CD8-positive, alpha-beta T cell (primary cell): ENCODE measurements at regions of chr3 and their contacts with region 1.

Region 1: DNA sequence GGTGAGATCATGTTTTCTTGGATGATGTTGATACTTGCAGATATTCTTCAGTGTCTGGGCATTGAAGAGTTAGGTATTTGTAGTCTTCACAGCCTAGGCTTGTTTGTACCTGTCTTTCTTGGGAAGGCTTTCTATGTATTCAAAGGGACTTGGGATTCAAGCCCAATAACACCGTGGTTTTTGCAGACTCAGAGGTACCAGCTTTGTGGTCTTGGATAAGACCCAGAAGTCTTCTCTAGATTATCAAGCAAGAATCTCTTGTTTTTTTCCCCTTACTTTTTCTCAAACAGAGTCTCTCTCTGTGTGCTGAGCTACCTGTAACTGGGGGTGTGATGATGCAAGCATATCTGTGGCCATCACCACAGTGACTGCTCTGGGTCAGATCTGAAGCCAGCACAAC is 42.7 kb upstream of the CCK start:
- DNase-seq: no peak
- ATAC-seq: no peak
- H3K4me3 ChIP-seq: no peak overlapping the region
- H3K4me3 Mint-ChIP-seq: no peak overlapping the region
- H3K27ac ChIP-seq: no peak overlapping the region
- H3K27ac Mint-ChIP-seq: no peak overlapping the region
- H3K4me1 ChIP-seq: no peaks in the 10 kb centered on the region
- H3K4me1 Mint-ChIP-seq: no peaks in the 10 kb centered on the region
- H3K27me3 ChIP-seq: no peaks in the 10 kb centered on the region
- H3K27me3 Mint-ChIP-seq: peaks cover 6% of the 10 kb centered on the region
- CTCF ChIP-seq: no peak

Region 2: GRCh38 chr3:42345811-42346210 is 37.2 kb after region 1 on chr3:
- CTCF ChIA-PET with region 1: no interaction called
- POLR2A ChIA-PET with region 1: no interaction called
- intact Hi-C with region 1: loop called in 1 of 2 experiments (anchors 1 kb)
- DNase-seq: peak in 7 of 9 experiments; percentile 20 to 78 (median 23)
- ATAC-seq: no peak
- H3K4me3 ChIP-seq: no peak overlapping the region
- H3K4me3 Mint-ChIP-seq: no peak overlapping the region
- H3K27ac ChIP-seq: peak overlapping the region; percentile 46 to 53
- H3K27ac Mint-ChIP-seq: no peak overlapping the region
- H3K4me1 ChIP-seq: peaks cover 27% of the 10 kb centered on the region
- H3K4me1 Mint-ChIP-seq: no peaks in the 10 kb centered on the region
- H3K27me3 ChIP-seq: no peaks in the 10 kb centered on the region
- H3K27me3 Mint-ChIP-seq: peaks cover 12% of the 10 kb centered on the region
- CTCF ChIP-seq: no peak

Region 3: DNA sequence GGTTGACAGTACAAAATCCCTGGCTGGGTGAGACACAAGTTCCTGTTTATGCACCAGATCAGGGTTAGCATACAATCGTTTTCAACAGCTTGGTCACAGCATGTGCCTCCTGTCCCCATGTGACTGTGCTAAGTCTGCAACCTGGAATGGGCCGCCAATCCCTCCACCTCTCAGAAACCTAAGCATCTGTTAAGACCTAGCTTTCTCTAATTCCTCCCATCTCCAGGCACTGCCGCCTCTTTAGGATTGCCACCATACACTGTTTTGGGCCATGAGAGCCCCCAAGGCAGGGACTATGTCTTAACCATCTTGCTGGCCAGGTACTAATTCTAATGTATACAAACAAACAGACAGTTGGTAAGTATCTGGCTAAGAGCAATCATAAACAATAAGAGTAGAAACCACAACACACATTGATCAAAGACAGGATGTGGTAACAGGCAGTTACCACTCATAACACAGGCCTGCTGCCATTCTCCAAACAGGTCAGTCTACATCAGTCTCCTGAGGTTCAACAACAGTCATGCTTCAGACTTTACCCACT is 247.5 kb after region 1 on chr3:
- CTCF ChIA-PET with region 1: no interaction called
- POLR2A ChIA-PET with region 1: no interaction called
- intact Hi-C with region 1: no loop called
- DNase-seq: peak in 8 of 9 experiments; percentile 18 to 82 (median 58)
- ATAC-seq: peak; percentile 83
- H3K4me3 ChIP-seq: no peak overlapping the region
- H3K4me3 Mint-ChIP-seq: peak overlapping the region; percentile 59
- H3K27ac ChIP-seq: peak overlapping the region; percentile 42 to 55
- H3K27ac Mint-ChIP-seq: peak overlapping the region; percentile 97
- H3K4me1 ChIP-seq: peaks cover 21% of the 10 kb centered on the region
- H3K4me1 Mint-ChIP-seq: peaks cover 29% of the 10 kb centered on the region
- H3K27me3 ChIP-seq: no peaks in the 10 kb centered on the region
- H3K27me3 Mint-ChIP-seq: no peaks in the 10 kb centered on the region
- CTCF ChIP-seq: no peak